ENCODE measurements at regions of chr20 and their contacts with region 1.

Region 1: DNA sequence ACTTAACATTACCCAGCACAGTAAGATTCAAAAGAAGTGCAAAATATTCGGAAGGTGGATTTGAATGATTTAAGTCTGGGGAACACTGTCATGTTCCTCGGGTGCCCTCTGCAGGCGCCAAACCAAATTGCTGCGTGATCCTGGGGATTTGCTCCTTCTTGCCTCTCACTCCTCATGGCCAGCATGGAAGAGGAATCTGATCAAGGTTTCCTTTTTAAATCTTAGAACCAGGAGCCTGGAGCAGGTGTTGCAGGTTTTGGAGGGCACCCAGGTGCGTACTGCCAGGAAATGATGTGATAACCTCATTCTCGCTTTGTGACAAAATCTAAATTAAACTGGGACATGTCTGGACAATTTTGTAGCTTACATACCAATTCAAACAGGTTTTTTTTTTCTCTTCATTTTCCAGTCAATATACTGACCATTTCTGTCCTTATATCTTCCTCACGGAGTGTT is 8.1 kb upstream of the PFDN4 start:
- DNase-seq: peak; percentile 57
- CTCF ChIP-seq: peak; percentile 89

Region 2: DNA sequence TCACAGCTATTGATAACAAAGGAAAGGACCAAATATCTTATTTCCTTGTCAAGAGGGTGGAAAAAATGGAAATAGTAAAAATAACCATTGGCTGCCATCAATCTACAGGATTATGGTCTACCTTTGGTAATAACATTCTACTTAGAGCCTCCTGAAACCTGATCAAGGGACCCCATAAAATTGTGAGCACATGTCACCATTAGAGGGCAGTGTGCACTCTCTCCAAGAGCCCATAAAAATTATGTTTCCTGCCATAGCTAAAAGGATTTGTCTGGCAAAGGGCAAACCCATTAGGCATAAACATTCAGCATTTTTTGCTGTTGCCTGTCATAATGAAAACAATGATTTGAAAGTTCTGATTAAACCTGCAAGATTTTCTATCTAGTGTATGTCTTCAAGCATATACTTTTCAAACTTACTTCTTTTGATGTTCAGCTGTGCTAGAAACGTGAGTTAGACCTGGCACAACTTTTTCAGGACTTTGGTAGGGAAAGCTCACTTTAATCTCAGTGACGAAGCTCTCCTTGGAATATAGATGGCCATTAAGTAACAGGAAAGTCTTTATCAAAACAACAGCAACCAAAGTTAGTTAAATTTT is 1887.5 kb before region 1 on chr20:
- CTCF ChIA-PET with region 1: interaction called, 10 read pairs
- POLR2A ChIA-PET with region 1: no interaction called
- DNase-seq: peak; percentile 46
- CTCF ChIP-seq: peak; percentile 63

Region 3: DNA sequence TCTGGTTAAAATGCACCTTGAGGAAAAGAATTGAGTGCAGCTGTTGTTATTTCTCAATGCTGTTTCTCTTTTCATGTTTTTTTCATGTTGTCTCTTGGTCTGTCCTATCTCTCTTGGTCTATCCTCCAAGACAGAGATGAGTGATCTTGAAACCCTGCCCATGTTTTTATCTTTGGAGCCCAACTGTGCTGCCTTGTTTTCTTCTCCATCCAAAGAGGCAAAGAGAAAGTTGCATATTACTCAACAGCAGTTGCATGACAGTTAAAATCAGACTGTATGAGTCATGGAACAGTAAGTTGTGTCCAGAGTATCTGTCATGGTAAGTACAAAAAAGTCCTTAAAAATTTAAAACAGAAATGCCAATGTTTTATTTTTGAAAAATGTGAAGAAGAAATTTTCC is 155.6 kb before region 1 on chr20:
- CTCF ChIA-PET with region 1: no interaction called
- POLR2A ChIA-PET with region 1: no interaction called
- DNase-seq: no peak
- CTCF ChIP-seq: no peak

Region 4: DNA sequence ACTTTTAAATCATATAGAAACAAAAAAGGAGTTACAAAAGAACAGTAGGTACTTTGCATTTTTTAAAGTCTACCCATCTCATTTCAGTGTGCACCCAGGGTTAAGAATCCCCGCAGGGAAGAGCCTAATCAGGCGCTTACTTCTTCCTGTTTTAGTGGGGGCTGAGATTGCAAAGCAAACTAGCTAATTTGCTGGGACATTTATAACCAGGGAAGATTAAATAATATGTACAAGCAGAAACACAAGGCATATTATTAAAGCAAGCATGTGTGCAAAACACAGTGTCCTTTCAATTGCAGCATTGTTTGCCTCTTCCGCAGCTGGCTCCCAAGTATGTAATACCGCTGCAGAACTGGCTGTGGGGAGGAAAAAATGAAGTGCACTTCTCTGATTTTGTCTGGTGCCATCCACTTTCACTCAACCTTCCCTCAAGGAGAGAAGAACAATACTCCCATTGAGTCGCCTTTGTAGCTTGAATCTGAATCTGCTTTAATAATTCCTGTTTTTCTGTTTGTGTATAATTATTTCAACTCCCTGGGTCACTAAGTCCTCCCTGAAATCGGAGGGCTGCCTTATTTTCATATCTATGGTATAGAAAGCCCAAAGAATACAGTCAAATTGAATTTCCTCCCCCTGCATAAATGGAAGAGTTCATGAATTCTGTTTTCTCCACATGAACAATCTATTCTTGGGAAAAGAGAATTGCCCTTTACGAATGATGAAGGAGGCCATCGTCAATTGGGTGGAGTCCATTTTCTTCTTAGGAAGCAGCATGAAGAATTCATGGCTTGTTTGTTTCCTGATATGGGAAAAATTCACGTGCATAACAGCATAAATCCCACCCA is 106.1 kb before region 1 on chr20:
- CTCF ChIA-PET with region 1: interaction called, 30 read pairs
- POLR2A ChIA-PET with region 1: no interaction called
- DNase-seq: no peak
- CTCF ChIP-seq: no peak

Region 5: DNA sequence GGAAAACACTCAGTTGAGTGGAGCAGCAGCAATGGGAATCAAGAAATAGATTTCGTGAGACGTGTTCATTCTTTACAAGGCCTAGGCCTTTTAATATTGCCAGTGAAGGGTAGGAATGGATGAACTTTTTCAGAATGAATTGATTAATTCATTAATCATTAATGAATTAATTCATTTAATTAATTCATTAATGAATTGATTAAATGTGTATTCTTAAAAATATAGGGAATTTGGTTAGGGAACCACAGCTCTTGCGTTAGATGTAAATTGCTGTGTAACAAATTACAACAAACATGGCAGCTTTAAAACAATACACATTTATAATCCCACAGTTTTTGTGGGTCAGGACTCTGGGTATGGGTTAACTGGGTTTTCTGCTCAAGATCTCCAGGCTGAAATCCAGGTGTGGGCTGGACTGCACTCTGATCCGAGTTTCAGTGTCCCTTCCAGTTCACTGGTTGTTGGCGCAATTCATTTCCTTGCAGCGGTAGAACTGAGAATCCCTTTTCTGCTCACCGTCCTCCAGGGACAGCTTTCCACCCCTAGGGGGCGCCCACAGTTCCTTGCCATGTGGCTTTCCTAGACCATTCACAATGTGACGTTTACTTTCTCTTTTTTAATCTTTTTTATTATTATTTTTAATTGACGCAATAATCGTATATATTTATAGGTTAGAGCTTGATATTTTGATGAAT is 96.5 kb before region 1 on chr20:
- CTCF ChIA-PET with region 1: interaction called, 136 read pairs
- POLR2A ChIA-PET with region 1: no interaction called
- DNase-seq: peak; percentile 69
- CTCF ChIP-seq: peak; percentile 80

Region 6: DNA sequence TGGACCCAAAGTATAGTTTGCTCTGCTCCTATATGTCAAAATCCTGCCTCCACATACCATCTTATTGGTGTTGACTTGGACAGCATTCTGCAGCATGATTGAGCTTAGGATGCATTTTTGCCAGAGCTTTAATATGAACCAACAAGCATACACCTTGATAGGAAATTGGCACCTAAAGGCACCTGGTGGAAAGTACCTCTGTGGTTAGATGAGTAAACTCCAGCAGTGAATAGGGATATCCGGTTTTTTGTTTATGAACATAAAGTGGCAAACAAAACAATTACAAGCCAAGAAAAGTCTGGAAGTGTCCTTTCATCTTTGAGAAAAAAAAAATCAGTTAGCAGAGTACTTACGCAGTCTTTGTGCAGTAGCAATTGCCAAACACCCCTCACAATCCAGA is 19.8 kb before region 1 on chr20:
- CTCF ChIA-PET with region 1: interaction called, 11 read pairs
- POLR2A ChIA-PET with region 1: no interaction called
- DNase-seq: no peak
- CTCF ChIP-seq: no peak

Region 7: GRCh38 chr20:54188132-54188849 is 11.5 kb before region 1 on chr20:
- CTCF ChIA-PET with region 1: interaction called, 12 read pairs
- POLR2A ChIA-PET with region 1: no interaction called
- DNase-seq: no peak
- CTCF ChIP-seq: no peak

Region 8: DNA sequence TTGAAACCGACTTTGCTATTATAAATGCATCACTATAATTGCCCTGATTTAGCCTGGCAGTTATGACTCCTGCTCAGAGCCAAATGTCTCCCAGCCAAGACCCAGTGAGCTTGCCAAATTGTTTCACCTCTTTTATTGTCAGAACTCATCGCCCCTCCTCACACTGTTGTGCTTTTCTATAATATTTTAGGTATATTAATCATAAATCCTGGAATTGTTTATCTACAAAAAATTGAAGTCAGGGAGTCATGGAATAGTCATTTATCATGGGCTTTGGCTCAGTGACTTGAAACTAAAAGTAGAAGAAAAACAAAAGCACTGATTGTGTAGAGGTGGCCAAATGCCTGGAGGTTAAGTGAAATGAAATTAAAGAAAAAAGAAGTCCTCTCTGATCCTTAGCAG is 93.8 kb after region 1 on chr20:
- CTCF ChIA-PET with region 1: no interaction called
- POLR2A ChIA-PET with region 1: no interaction called
- DNase-seq: no peak
- CTCF ChIP-seq: no peak

Measured in GM10248 (cell line).